Activated CD4-positive, alpha-beta T cell treated with anti-CD3 and anti-CD28 coated beads for 36 hours (primary cell): ENCODE measurements at regions of chr9 and their contacts with region 1.

Region 1: DNA sequence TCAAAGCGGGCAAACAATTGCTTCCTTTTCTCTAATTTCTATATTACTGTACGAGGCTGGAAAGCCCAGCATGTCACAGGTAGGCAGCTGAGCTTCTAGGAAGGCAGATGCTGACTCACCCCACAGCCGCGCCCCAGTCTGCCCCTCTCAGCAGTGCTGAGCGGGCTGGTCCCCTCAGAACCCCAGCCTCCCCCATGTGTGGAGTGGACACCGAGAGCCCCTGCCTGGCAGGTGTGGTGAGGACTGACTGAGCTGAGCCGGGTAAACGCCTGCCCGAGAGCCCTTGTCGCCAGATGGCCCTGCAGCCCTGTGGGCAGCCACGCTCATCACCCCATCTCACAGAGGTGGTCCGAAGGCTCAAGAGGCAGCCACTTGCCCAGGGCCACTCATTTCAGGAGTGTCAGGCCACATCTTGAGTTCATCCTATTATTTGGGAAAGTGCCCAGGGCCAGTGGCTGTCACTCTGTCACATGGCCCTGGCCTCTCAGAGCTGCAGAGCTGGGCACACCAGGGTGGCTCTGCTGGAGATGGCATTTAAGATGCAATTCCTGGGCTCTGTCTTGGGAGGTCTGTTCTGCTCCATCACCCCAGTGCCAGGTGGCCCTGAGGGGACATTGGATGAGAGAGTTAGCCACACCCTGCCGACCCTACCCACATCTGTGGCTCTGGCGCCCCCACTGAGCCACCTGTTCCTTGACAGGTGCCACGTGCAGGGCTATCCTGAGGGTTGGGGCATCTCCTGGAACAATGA is 12.4 kb downstream of the CARD19 start:
- DNase-seq: peak; percentile 81
- ATAC-seq: peak; percentile 92
- H3K4me3 Mint-ChIP-seq: no peak overlapping the region
- H3K27ac Mint-ChIP-seq: peak overlapping the region; percentile 80
- H3K4me1 Mint-ChIP-seq: peaks cover 49% of the 10 kb centered on the region
- H3K27me3 Mint-ChIP-seq: no peaks in the 10 kb centered on the region

Region 2: DNA sequence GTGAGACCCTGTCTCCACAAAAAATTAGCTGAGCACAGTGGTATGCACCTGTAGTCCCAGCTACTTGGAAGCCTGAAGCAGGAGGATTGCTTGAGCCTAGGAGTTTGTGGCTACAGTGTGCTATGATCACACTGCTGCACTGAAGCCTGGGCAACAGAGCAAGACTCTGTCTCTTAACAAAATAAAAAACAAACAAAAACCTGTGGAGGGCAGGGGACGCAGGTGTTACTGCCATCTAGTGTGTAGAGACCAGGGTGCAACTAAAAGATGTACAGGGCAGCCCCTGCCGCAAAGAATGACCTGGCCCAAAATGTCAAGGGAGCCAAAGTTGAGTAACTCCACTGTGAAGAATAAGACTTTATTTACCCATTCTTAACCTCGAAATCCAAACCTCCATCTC is 653.2 kb before region 1 on chr9:
- CTCF ChIA-PET with region 1: no interaction called
- POLR2A ChIA-PET with region 1: no interaction called
- intact Hi-C with region 1: no loop called
- DNase-seq: peak; percentile 19
- ATAC-seq: no peak
- H3K4me3 Mint-ChIP-seq: no peak overlapping the region
- H3K27ac Mint-ChIP-seq: no peak overlapping the region
- H3K4me1 Mint-ChIP-seq: no peaks in the 10 kb centered on the region
- H3K27me3 Mint-ChIP-seq: no peaks in the 10 kb centered on the region

Region 3: DNA sequence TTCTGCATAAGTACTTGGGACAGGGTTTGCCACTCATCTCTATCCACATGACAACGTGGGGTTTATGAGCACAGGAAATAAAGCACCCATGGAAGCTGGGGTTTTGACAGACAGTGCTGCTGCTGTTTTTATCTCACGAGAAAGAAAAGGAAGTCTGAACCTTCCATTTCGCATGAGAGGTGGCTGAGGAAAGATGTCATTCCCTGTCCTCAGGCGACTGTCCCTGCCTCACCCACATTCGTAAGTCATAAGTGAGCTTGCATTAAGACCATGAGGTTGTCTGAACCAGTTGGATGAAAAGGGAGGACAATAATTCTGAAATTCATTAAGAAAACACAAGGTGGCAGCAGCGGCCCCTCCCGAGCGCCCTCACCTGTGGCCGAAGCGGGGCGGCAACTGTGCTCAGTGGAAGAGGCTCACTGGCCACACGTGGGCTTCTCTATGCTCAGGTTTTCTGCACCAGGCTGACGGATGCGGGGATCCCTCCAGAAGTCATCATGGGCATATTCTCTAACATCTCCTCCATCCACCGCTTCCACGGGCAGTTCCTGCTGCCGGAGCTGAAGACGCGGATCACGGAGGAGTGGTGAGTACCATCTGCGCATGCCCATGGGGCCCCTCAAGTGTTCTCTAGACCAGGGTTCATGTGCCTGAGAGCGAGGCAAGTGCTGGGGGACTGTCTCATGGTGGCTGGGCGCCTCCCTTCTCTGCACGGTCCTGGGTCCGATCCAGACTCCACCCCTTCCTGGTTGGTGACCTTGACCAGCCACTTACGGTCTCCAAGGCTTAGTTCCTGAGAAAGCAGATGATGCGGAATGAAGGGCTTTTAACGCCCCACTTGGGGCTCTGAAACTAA is 104.7 kb before region 1 on chr9:
- CTCF ChIA-PET with region 1: interaction called, 40 read pairs
- POLR2A ChIA-PET with region 1: no interaction called
- intact Hi-C with region 1: no loop called
- DNase-seq: peak; percentile 83
- ATAC-seq: peak; percentile 90
- H3K4me3 Mint-ChIP-seq: no peak overlapping the region
- H3K27ac Mint-ChIP-seq: peak overlapping the region; percentile 65
- H3K4me1 Mint-ChIP-seq: peaks cover 57% of the 10 kb centered on the region
- H3K27me3 Mint-ChIP-seq: no peaks in the 10 kb centered on the region

Region 4: DNA sequence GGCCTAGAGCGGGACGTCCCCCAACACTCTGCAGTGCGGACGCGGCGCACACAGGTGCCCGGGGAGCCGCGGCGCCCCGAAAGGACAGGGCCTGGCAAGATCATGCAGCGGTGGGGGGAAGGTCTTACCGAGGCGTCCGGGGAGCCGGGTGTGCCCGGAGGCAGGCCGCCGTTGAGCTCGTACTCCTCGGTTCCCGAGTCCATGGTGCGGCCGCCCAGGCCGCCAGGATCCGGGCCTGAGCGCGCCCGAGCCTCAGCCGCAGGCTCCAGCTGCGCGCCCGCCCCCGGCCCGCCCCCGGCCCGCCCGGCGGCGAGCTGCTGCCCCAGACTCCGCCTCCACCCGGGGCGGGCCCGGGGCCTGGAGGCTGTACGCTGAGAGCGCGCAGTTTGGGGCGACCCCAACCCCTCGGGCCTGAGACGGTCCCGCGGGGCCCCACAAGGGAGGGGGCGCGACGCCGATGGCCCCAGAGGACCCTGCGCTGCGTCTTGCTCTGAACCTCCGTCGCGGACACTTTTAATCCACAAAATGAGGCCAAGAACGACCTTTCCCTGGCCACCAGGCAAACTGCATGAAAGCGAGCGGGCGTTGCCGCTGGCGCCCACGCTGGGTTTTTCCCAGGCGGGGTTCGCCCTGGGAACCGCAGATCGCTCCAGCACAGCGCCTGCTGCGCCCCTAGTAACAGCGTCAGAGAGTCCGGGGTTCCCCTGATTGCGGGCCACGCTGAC is 25.7 kb after region 1 on chr9 and contains the start of gene NINJ1:
- CTCF ChIA-PET with region 1: interaction called, 12 read pairs
- POLR2A ChIA-PET with region 1: no interaction called
- intact Hi-C with region 1: no loop called
- DNase-seq: peak; percentile 95
- ATAC-seq: peak; percentile 83
- H3K4me3 Mint-ChIP-seq: peak within 1 kb of the TSS; percentile 88
- H3K27ac Mint-ChIP-seq: peak within 1 kb of the TSS; percentile 92
- H3K4me1 Mint-ChIP-seq: peaks cover 63% of the 10 kb centered on the region
- H3K27me3 Mint-ChIP-seq: no peaks in the 10 kb centered on the region
- total RNA-seq, gene NINJ1: 77.4 to 108 TPM

Region 5: GRCh38 chr9:93154315-93154903 is 45.9 kb after region 1 on chr9:
- CTCF ChIA-PET with region 1: interaction called, 6 read pairs
- POLR2A ChIA-PET with region 1: no interaction called
- intact Hi-C with region 1: loop called (anchors 2 to 5 kb)
- DNase-seq: peak; percentile 76
- ATAC-seq: peak; percentile 24
- H3K4me3 Mint-ChIP-seq: no peak overlapping the region
- H3K27ac Mint-ChIP-seq: no peak overlapping the region
- H3K4me1 Mint-ChIP-seq: peaks cover 28% of the 10 kb centered on the region
- H3K27me3 Mint-ChIP-seq: no peaks in the 10 kb centered on the region

Region 6: GRCh38 chr9:93219692-93220091 is 111.2 kb after region 1 on chr9:
- CTCF ChIA-PET with region 1: no interaction called
- POLR2A ChIA-PET with region 1: interaction called, 10 read pairs
- intact Hi-C with region 1: no loop called
- DNase-seq: no peak
- ATAC-seq: no peak
- H3K4me3 Mint-ChIP-seq: no peak overlapping the region
- H3K27ac Mint-ChIP-seq: no peak overlapping the region
- H3K4me1 Mint-ChIP-seq: no peaks in the 10 kb centered on the region
- H3K27me3 Mint-ChIP-seq: no peaks in the 10 kb centered on the region

Region 7: DNA sequence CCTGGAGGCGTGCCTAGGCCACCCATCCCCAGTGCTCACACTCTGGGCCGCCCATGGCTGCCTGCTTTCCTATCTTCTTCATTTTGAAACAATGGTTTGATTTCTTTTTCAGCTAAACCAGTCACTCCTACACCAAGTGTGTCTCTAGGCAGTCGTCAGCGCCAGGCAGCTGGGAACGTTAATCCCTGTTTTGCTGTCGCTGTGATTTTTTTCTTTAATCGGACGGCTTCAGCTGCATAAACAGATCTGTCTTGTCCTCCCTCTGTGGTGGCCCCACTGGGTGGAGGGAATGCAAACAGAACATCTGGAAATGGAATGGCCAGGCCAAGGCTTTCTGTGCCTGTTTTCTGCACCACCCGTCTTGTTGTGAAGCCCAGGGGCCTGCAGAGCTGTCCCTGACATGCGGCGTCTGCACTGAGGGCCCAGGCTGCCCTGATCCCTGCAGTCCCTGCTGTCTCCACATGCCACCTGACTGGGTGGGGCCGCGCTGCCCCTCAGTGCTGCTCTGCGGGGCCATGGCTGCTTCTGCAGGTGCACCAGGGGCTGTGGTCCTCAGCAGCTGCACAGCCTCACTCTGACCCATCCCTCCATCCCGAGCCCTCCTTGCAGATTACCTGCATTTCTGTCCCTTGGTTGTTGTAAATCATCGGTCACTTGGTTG is 127.0 kb after region 1 on chr9:
- CTCF ChIA-PET with region 1: no interaction called
- POLR2A ChIA-PET with region 1: no interaction called
- intact Hi-C with region 1: no loop called
- DNase-seq: no peak
- ATAC-seq: no peak
- H3K4me3 Mint-ChIP-seq: no peak overlapping the region
- H3K27ac Mint-ChIP-seq: no peak overlapping the region
- H3K4me1 Mint-ChIP-seq: peaks cover 6% of the 10 kb centered on the region
- H3K27me3 Mint-ChIP-seq: peaks cover 5% of the 10 kb centered on the region

Region 8: DNA sequence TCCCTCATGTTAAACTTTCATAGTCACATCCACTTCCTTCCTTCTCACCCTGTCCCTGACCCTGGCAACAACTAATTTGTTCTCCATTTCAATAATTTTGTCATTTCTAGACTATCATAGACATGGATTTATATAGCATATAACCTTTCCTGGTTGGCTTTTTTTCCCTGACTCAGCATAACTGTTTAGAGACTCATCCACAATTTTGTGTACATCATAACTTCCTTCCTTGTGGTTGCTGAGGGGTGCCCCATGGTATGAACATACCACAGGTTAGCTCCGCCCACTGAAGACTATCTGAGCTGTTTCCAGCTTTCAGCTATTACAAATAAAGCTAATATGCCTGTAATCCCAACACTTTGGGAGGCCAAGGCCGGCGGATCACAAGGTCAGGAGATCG is 605.2 kb after region 1 on chr9:
- CTCF ChIA-PET with region 1: no interaction called
- POLR2A ChIA-PET with region 1: no interaction called
- intact Hi-C with region 1: no loop called
- DNase-seq: no peak
- ATAC-seq: no peak
- H3K4me3 Mint-ChIP-seq: no peak overlapping the region
- H3K27ac Mint-ChIP-seq: no peak overlapping the region
- H3K4me1 Mint-ChIP-seq: no peaks in the 10 kb centered on the region
- H3K27me3 Mint-ChIP-seq: peaks cover 17% of the 10 kb centered on the region